Heart left ventricle (tissue), 16 donors: ENCODE measurements at regions of chr7 and their contacts with region 1.

Region 1: GRCh38 chr7:146443102-146443501 is 326.5 kb downstream of the CNTNAP2 start:
- DNase-seq: no peak
- ATAC-seq: no peak
- H3K4me3 ChIP-seq: no peak overlapping the region
- H3K27ac ChIP-seq: no peak overlapping the region
- H3K4me1 ChIP-seq: no peaks in the 10 kb centered on the region
- H3K27me3 ChIP-seq: no peaks in the 10 kb centered on the region
- CTCF ChIP-seq: no peak
- POLR2A ChIP-seq: no peak

Region 2: DNA sequence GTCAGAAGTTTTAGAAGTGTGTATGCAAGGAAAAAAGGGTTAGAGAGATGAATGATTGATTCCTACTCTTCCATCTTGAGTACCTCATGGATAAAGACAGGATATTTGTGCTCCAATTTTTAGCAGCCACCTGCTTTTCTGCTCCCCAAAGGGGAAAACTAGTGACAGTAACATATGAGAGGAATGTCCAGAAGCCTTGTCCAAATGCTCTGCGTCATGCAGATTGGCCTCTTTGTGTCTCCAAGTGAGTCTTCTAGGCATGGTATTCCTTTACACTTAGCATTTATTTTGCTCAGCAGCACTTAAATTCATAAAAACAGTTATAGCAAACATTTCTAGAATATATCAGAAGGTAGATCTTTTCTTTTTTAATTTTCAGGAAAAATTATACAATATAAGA is 19.7 kb before region 1 on chr7:
- intact Hi-C with region 1: loop called in 1 of 10 experiments (anchors 2 kb)
- DNase-seq: no peak
- ATAC-seq: no peak
- H3K4me3 ChIP-seq: no peak overlapping the region
- H3K27ac ChIP-seq: no peak overlapping the region
- H3K4me1 ChIP-seq: no peaks in the 10 kb centered on the region
- H3K27me3 ChIP-seq: no peaks in the 10 kb centered on the region
- CTCF ChIP-seq: no peak
- POLR2A ChIP-seq: no peak

Region 3: GRCh38 chr7:146494952-146495596 is 52.0 kb after region 1 on chr7:
- intact Hi-C with region 1: no loop called
- DNase-seq: no peak
- ATAC-seq: no peak
- H3K4me3 ChIP-seq: no peak overlapping the region
- H3K27ac ChIP-seq: no peak overlapping the region
- H3K4me1 ChIP-seq: no peaks in the 10 kb centered on the region
- H3K27me3 ChIP-seq: no peaks in the 10 kb centered on the region
- CTCF ChIP-seq: no peak
- POLR2A ChIP-seq: no peak